ENCODE measurements at regions of chr7 and their contacts with region 1.

Region 1: DNA sequence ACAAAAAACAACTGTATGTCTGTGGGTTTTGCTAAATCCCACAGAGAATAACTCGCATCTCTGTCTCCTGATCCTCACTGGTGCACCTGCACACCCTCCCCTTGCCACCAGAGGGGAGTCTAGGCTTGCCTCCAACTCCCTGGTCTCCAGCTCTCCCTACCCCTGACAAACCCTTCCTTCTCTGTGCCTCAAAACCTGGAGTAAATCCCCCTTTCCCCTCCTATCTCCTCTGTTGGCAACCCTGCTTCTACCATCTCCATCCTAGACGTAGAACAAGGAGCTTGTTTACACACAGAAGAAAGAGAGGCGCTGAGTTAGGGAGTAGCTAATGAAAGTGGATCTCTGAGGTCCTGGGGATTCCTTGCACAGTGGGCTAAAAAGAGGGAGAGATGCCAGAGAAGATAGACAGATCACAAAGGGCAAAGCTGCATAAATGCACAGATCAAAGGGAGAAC is 6.0 kb downstream of the MBLAC1 start:
- DNase-seq: peak; percentile 74 to 86
- ATAC-seq: peak; percentile 92
- H3K4me3 ChIP-seq: no peak overlapping the region
- H3K27ac ChIP-seq: no peak overlapping the region
- H3K4me1 ChIP-seq: peaks cover 13% of the 10 kb centered on the region; the same call in 1 of the 3 replicates
- CTCF ChIP-seq: peak; percentile 87
- EP300 ChIP-seq: no peak
- POLR2A ChIP-seq: no peak
- RAD21 ChIP-seq: peak; percentile 90 to 96

Region 2: DNA sequence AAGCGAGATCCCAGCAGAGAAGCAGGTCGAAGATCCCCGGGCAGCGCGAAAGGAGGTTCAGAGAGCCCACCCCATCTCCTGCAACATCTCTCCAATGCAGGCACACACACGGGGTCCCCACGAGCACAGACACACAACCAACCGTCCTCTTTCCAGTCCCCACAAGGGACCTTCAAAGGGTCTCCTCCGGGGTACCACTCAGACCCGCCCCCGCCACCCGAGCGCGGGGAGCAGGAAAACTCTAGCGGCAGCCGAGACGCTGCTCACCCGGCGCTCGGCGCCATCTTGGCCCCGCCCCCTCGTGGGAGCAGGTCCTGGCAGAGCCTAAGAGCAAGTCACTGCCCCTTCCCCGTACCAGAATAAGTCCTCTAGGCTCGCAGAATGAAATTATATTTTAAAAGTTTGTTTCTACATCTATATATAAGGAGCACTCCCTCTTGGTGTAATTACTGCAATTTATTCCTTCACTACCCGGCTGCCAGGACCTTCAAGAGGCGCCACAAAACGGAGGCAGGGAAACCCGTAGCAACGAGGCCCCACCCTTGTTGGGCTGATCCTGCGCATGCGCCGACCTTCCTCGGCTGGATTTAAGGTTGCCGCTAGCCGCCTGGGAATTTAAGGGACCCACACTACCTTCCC is 13.5 kb before region 1 on chr7 and contains the starts of genes CNPY4 and TAF6:
- CTCF ChIA-PET with region 1: interaction called, 46 read pairs
- POLR2A ChIA-PET with region 1: no interaction called
- DNase-seq: peak; percentile 98 to 99
- ATAC-seq: peak; percentile 84 to 86
- H3K4me3 ChIP-seq: peak within 1 kb of the TSS; percentile 81
- H3K27ac ChIP-seq: peak within 1 kb of the TSS; percentile 86 to 90
- H3K4me1 ChIP-seq: peaks cover 13% of the 10 kb centered on the region
- CTCF ChIP-seq: no peak
- EP300 ChIP-seq: no peak
- POLR2A ChIP-seq: peak; percentile 89
- RAD21 ChIP-seq: no peak
- polyA plus RNA-seq, gene CNPY4: 11.3 and 11.7 TPM in 2 replicates
- polyA plus RNA-seq, gene TAF6: 36.2 and 45.1 TPM in 2 replicates

Region 3: GRCh38 chr7:100177045-100178001 is 44.6 kb after region 1 on chr7 and contains the starts of genes GPC2 and STAG3:
- CTCF ChIA-PET with region 1: interaction called, 25 read pairs
- POLR2A ChIA-PET with region 1: no interaction called
- DNase-seq: peak; percentile 87 to 96
- ATAC-seq: peak; percentile 89 to 95
- H3K4me3 ChIP-seq: peak within 1 kb of the TSS; percentile 64
- H3K27ac ChIP-seq: peak within 1 kb of the TSS; percentile 68 to 83
- H3K4me1 ChIP-seq: peaks cover 9% of the 10 kb centered on the region; the same call in 2 of the 3 replicates
- CTCF ChIP-seq: no peak
- EP300 ChIP-seq: no peak
- POLR2A ChIP-seq: peak; percentile 19; the same call in 1 of the 2 replicates
- RAD21 ChIP-seq: no peak
- polyA plus RNA-seq, gene GPC2: 1.1 and 1.8 TPM in 2 replicates
- polyA plus RNA-seq, gene STAG3: 0.25 and 0.36 TPM in 2 replicates

Region 4: DNA sequence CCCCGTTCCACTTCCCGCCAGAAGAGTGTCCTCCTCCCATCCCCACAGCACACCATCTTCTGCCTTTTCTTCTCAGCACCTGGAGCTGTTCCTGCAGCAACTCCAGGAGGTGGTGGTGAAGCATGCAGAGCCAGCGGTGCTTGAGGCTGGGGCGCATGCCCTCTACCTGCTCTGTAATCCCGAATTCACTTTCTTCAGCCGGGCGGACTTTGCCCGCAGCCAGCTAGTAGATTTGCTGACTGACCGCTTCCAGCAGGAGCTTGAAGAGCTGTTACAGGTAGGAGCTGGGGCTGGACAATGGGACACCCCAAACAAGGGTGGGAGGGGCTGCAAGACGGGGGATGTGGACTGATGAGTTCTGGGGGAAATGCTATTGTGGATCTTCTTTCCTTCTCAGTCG is 68.0 kb after region 1 on chr7:
- CTCF ChIA-PET with region 1: interaction called, 13 read pairs
- POLR2A ChIA-PET with region 1: no interaction called
- DNase-seq: no peak
- ATAC-seq: 0 out of 6 replicates have a peak, but pooled peaks of 1 of the 2 experiments have one; percentile 30
- H3K4me3 ChIP-seq: no peak overlapping the region
- H3K27ac ChIP-seq: no peak overlapping the region
- H3K4me1 ChIP-seq: no peaks in the 10 kb centered on the region
- CTCF ChIP-seq: no peak
- EP300 ChIP-seq: no peak
- POLR2A ChIP-seq: no peak
- RAD21 ChIP-seq: no peak

Region 5: GRCh38 chr7:100221231-100221718 is 88.6 kb after region 1 on chr7:
- CTCF ChIA-PET with region 1: interaction called, 58 read pairs
- POLR2A ChIA-PET with region 1: no interaction called
- DNase-seq: no peak
- ATAC-seq: no peak
- H3K4me3 ChIP-seq: no peak overlapping the region
- H3K27ac ChIP-seq: no peak overlapping the region
- H3K4me1 ChIP-seq: no peaks in the 10 kb centered on the region
- CTCF ChIP-seq: no peak
- EP300 ChIP-seq: no peak
- POLR2A ChIP-seq: no peak
- RAD21 ChIP-seq: no peak

Region 6: GRCh38 chr7:100483101-100483721 is 350.5 kb after region 1 on chr7:
- CTCF ChIA-PET with region 1: no interaction called
- POLR2A ChIA-PET with region 1: no interaction called
- DNase-seq: peak; percentile 64 to 70
- ATAC-seq: peak; percentile 57 to 66
- H3K4me3 ChIP-seq: peak overlapping the region; percentile 73
- H3K27ac ChIP-seq: peak overlapping the region; percentile 88 to 94
- H3K4me1 ChIP-seq: peaks cover 44% of the 10 kb centered on the region
- CTCF ChIP-seq: peak; percentile 100
- EP300 ChIP-seq: no peak
- POLR2A ChIP-seq: no peak
- RAD21 ChIP-seq: peak; percentile 30 to 75; a peak in 4 of 5 replicates

Measured in A549 (cell line).